Panc1 (cell line): ENCODE measurements at regions of chr16 and their contacts with region 1.

Region 1: GRCh38 chr16:4913130-4913773 is 23.7 kb downstream of the PPL start:
- DNase-seq: no peak
- ATAC-seq: no peak
- H3K4me3 ChIP-seq: no peak overlapping the region
- H3K27ac ChIP-seq: no peak overlapping the region
- H3K4me1 ChIP-seq: no peaks in the 10 kb centered on the region; the same call in 1 of the 2 replicates
- H3K27me3 ChIP-seq: no peaks in the 10 kb centered on the region
- CTCF ChIP-seq: no peak

Region 2: GRCh38 chr16:4768549-4769305 is 144.5 kb before region 1 on chr16:
- CTCF ChIA-PET with region 1: interaction called, 3 read pairs
- POLR2A ChIA-PET with region 1: interaction called, 20 read pairs
- in situ Hi-C with region 1: no loop called
- intact Hi-C with region 1: no loop called
- DNase-seq: peak; percentile 92
- ATAC-seq: peak; percentile 91
- H3K4me3 ChIP-seq: peak overlapping the region; percentile 70 to 94
- H3K27ac ChIP-seq: peak overlapping the region; percentile 97
- H3K4me1 ChIP-seq: peaks cover 18% of the 10 kb centered on the region
- H3K27me3 ChIP-seq: no peaks in the 10 kb centered on the region
- CTCF ChIP-seq: no peak